HEK293 (cell line): ENCODE measurements at regions of chrX and their contacts with region 1.

Region 1: GRCh38 chrX:117985241-117985640 is 131.4 kb downstream of the KLHL13 start:
- H3K4me3 ChIP-seq: no peak overlapping the region
- H3K27ac ChIP-seq: no peak overlapping the region
- H3K4me1 ChIP-seq: no peaks in the 10 kb centered on the region
- CTCF ChIP-seq: no peak

Region 2: DNA sequence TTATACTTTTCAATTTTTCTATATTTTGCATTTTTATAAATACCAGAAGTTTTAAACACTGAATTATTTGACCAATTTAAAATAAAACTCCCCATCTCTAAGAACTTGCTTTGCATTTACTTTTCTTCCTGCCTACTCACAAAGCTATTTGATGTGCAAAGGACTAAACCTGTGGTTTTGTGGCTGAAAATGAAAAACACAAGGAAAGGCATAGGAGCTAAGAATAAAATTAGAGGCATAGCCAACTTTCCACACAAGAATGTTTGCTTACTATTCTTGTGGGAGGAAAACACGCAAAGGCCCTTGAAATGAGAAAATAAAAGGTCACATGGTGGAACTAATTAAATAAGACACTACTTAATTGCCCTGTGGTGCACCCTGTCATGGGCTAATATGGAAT is 89.8 kb before region 1 on chrX:
- CTCF ChIA-PET with region 1: no interaction called
- POLR2A ChIA-PET with region 1: no interaction called
- H3K4me3 ChIP-seq: no peak overlapping the region
- H3K27ac ChIP-seq: no peak overlapping the region
- H3K4me1 ChIP-seq: no peaks in the 10 kb centered on the region
- CTCF ChIP-seq: no peak

Region 3: GRCh38 chrX:117972711-117973109 is 12.5 kb before region 1 on chrX:
- CTCF ChIA-PET with region 1: interaction called, 19 read pairs
- POLR2A ChIA-PET with region 1: no interaction called
- H3K4me3 ChIP-seq: peak overlapping the region; percentile 11
- H3K27ac ChIP-seq: no peak overlapping the region
- H3K4me1 ChIP-seq: peaks cover 8% of the 10 kb centered on the region
- CTCF ChIP-seq: no peak

Region 4: DNA sequence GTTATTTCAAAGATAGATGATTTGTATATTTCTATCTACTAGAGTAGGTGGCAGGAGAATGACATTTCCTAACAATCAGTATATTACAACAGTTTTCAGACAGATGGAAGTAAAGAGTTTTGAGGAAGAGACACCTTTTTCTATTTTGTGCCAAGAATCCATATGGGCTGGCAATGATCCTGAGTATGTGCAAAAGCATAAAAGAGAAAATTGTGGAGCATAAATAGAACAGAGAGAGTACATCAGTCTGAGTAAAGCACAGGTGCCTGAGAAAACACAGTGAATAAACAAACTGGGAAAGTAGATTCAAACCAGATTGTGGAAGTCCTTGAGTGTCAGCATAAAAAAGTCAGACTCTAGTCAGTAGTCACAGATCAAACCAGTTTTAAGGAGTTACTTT is 263.9 kb after region 1 on chrX:
- CTCF ChIA-PET with region 1: no interaction called
- POLR2A ChIA-PET with region 1: no interaction called
- H3K4me3 ChIP-seq: no peak overlapping the region
- H3K27ac ChIP-seq: no peak overlapping the region
- H3K4me1 ChIP-seq: no peaks in the 10 kb centered on the region
- CTCF ChIP-seq: no peak

Region 5: DNA sequence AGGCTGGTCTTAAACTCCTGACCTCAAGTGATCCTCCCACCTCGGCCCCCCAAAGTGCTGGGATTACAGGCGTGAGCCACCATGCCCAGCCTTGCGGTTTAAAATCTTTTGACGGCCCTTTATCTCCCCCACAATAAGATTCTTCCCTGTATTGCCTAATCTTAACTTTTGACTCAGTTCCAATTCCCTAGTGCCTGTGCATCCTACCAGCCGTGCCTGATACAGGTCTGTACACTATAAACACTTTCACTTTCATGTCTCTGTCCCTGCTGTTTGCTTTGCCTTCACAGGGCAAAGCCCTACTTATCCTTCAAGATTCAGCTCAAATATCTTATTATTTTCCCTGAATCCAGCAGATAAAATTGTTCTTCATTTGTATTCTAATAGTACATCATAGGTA is 435.2 kb after region 1 on chrX:
- CTCF ChIA-PET with region 1: no interaction called
- POLR2A ChIA-PET with region 1: no interaction called
- H3K4me3 ChIP-seq: no peak overlapping the region
- H3K27ac ChIP-seq: no peak overlapping the region
- H3K4me1 ChIP-seq: no peaks in the 10 kb centered on the region
- CTCF ChIP-seq: no peak